Dorsolateral prefrontal cortex (tissue), 120 donors: ENCODE measurements at regions of chr7 and their contacts with region 1.

Region 1: GRCh38 chr7:99918959-99919813 is at the start of gene TRIM4:
- DNase-seq: peak; percentile 82 to 95 (median 88)
- H3K4me3 ChIP-seq: peak within 1 kb of the TSS; percentile 64 to 100 (median 93)
- H3K27ac ChIP-seq: peak within 1 kb of the TSS; percentile 26 to 93 (median 83)
- H3K27me3 ChIP-seq: no peaks in the 10 kb centered on the region
- CTCF ChIP-seq: peak in 35 of 56 donors; percentile 3 to 56 (median 29)
- total RNA-seq, gene TRIM4: 12.0 to 29.0 (median 18.5) TPM

Region 2: GRCh38 chr7:99616359-99617191 is 302.6 kb before region 1 on chr7 and contains the start of gene ZSCAN25:
- intact Hi-C with region 1: loop called in 1 of 2 experiments (anchors 10 kb)
- DNase-seq: peak; percentile 75 to 92 (median 89)
- H3K4me3 ChIP-seq: peak within 1 kb of the TSS; percentile 70 to 100 (median 98)
- H3K27ac ChIP-seq: peak within 1 kb of the TSS in 57 of 59 donors; percentile 33 to 95 (median 80)
- H3K27me3 ChIP-seq: no peaks in the 10 kb centered on the region
- CTCF ChIP-seq: peak in 46 of 56 donors; percentile 14 to 61 (median 36)
- total RNA-seq, gene ZSCAN25: 14.8 to 38.1 (median 24.2) TPM

Region 3: DNA sequence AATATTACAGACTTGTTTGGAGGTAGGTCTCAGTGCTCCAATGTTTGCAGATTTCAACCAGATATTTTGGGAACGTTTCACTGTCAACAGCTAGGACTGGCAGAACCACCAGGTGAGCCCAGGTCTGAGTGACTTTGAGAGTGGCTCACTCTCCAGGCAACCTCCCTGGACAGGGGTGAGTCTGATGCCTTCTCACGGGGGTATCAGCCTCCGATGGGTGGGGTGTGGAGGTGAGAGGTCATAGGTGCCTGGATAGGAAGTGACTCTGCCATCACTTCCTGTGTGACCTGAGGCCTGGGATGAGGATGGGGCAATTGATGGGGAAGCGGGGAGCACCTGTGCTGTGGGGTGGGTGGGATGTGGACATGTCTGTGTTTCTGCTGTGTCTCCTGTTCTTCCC is 52.1 kb after region 1 on chr7:
- intact Hi-C with region 1: loop called in 1 of 2 experiments (anchors 5 kb)
- DNase-seq: no peak
- H3K4me3 ChIP-seq: no peak overlapping the region
- H3K27ac ChIP-seq: no peak overlapping the region
- H3K27me3 ChIP-seq: peaks cover 0 to 5% (median 0%) of the 10 kb centered on the region in 45 donors
- CTCF ChIP-seq: no peak

Region 4: GRCh38 chr7:99990460-99990852 is 71.3 kb after region 1 on chr7:
- intact Hi-C with region 1: loop called in 1 of 2 experiments (anchors 5 kb)
- DNase-seq: peak in 1 of 10 donors; percentile 35
- H3K4me3 ChIP-seq: peak overlapping the region in 58 of 59 donors; percentile 19 to 69 (median 53)
- H3K27ac ChIP-seq: peak overlapping the region in 30 of 59 donors; percentile 2 to 82 (median 60)
- H3K27me3 ChIP-seq: no peaks in the 10 kb centered on the region
- CTCF ChIP-seq: no peak

Region 5: DNA sequence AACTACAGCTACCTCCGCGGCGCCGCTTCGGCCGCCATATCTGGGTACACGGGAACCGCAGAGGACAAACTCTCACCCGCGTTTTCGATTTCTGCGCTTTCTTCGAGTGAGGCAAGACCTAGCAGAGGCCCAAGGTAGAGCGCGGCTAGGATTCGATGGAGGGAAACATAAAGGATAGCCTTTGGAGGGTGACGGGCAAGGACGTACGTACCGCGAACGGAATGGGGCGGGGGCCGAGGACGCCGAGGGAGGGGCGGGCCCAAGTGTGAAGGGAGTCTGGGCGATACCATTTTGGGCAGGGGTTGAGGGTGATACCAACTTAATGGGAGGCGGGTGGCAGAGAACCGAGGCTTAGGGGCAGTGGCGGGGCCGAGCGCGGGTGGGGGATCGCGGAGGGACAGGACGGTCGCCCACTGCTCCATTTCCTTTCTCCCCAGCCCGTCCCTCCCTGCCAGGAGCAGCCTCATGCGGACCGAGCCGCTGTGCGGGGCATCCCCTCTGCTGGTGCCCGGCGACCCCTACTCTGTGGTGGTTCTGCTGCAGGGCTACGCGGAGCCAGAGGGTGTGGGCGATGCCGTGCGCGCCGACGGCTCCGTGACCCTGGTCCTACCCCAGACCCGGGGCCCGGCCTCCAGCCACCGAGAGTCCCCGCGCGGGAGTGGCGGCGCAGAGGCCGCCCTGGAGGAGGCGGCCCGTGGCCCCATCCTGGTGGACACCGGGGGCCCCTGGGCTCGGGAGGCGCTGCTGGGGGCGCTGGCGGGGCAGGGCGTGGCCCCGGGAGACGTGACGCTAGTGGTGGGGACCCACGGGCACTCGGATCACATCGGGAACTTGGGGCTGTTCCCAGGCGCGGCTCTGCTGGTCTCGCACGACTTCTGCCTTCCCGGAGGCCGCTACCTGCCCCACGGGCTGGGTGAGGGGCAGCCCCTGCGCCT is 208.0 kb after region 1 on chr7 and contains the start of gene MBLAC1:
- intact Hi-C with region 1: loop called in 1 of 2 experiments (anchors 10 kb)
- DNase-seq: peak; percentile 78 to 94 (median 90)
- H3K4me3 ChIP-seq: peak within 1 kb of the TSS; percentile 64 to 98 (median 93)
- H3K27ac ChIP-seq: peak within 1 kb of the TSS; percentile 55 to 99 (median 95)
- H3K27me3 ChIP-seq: no peaks in the 10 kb centered on the region
- CTCF ChIP-seq: peak in 9 of 56 donors; percentile 1 to 27 (median 9)
- total RNA-seq, gene MBLAC1: 5.6 to 16.5 (median 11.0) TPM